ENCODE measurements at regions of chr18 and their contacts with region 1.

Region 1: GRCh38 chr18:70132999-70133398 is 72.5 kb downstream of the RTTN start:
- DNase-seq: no peak
- ATAC-seq: peak in 3 of 4 donors; percentile 36 to 81 (median 74)
- H3K4me3 ChIP-seq: no peak overlapping the region
- H3K27ac ChIP-seq: no peak overlapping the region
- H3K4me1 ChIP-seq: peaks cover 0 to under 1% (median 0%) of the 10 kb centered on the region in 3 donors
- H3K27me3 ChIP-seq: no peaks in the 10 kb centered on the region
- CTCF ChIP-seq: no peak

Region 2: GRCh38 chr18:70181015-70181414 is 48.0 kb after region 1 on chr18:
- intact Hi-C with region 1: loop called in 1 of 3 experiments (anchors 10 kb)
- DNase-seq: no peak
- ATAC-seq: no peak
- H3K4me3 ChIP-seq: no peak overlapping the region
- H3K27ac ChIP-seq: no peak overlapping the region
- H3K4me1 ChIP-seq: no peaks in the 10 kb centered on the region
- H3K27me3 ChIP-seq: no peaks in the 10 kb centered on the region
- CTCF ChIP-seq: no peak